Calu3 (cell line): ENCODE measurements at regions of chr3 and their contacts with region 1.

Region 1: DNA sequence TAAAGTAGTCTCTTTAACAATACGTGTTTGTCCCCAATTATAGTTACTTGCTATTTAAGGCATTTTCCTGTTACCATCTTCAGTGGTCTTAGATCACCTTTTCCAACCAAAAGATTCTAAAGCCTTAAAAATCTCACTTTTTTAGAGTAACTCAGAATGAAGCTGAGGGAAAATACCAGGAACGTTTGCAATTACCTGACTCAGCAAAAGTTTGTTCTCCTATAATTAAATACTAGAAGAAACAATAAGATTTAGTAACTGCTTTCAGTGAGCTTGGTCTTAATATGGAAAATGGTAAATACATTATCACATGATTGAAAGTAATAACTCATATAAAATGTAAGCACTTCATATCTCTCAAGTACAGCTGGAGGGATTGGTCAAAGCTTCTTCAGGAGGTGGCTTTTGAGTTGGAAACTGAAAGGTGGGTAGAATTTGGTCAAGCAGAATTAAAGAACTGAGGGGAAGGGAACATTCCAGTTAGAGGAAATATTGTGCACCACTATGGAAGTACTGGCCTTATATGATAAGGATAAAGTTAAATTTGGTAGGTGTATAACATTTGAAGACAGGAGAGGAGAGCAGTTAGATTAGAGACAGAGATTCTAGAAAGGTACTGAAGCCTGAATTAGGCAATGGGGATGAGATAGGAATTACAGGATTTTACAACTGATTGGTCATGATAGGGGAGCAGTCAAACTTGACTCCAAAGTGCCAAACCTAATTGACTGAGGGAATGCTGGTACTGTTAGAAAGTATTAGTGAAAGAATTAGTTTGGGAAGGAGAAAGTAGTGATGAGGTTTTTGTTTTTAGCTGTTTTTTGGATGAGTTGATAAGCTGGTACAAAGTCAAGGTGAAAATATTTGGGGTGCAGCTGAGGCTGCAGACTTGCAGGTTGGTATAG is 21.9 kb downstream of the TSC22D2 start:
- DNase-seq: no peak
- H3K4me3 Mint-ChIP-seq: no peak overlapping the region
- H3K27ac Mint-ChIP-seq: no peak overlapping the region
- H3K4me1 Mint-ChIP-seq: peaks cover 12% of the 10 kb centered on the region
- H3K27me3 Mint-ChIP-seq: no peaks in the 10 kb centered on the region
- CTCF ChIP-seq: no peak

Region 2: GRCh38 chr3:150444399-150444798 is 14.4 kb after region 1 on chr3:
- CTCF ChIA-PET with region 1: no interaction called
- intact Hi-C with region 1: loop called (anchors 2 kb)
- DNase-seq: no peak
- H3K4me3 Mint-ChIP-seq: no peak overlapping the region
- H3K27ac Mint-ChIP-seq: peak overlapping the region; percentile 23
- H3K4me1 Mint-ChIP-seq: peaks cover 66% of the 10 kb centered on the region
- H3K27me3 Mint-ChIP-seq: no peaks in the 10 kb centered on the region
- CTCF ChIP-seq: no peak